Naive thymus-derived CD4-positive, alpha-beta T cell (primary cell): ENCODE measurements at regions of chr15 and their contacts with region 1.

Region 1: DNA sequence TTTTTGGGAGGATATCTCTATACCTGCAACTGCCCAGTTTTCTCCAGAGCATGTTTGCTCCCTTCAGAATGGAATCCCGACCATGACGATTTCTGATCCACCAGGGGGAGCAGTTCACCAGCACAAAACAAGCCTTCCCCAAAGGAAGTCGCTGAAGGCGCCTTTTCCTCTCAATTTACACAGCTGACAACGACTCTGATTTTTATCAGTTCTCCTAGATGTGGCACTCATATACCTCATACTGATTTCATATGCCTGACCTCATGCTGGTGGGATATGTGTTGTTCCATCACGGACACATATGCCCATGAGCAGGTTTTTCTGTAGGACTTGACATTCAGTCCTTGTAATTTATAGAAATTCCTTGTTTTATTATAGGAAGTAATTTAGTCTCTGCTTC is 1028.2 kb downstream of the MCTP2 start:
- DNase-seq: peak; percentile 7 to 61 (median 43)
- ATAC-seq: peak; percentile 40
- H3K4me3 ChIP-seq: no peak overlapping the region
- H3K4me3 Mint-ChIP-seq: no peak overlapping the region
- H3K27ac ChIP-seq: no peak overlapping the region
- H3K27ac Mint-ChIP-seq: no peak overlapping the region
- H3K4me1 ChIP-seq: no peaks in the 10 kb centered on the region
- H3K4me1 Mint-ChIP-seq: peaks cover 0 to 13% (median 0%) of the 10 kb centered on the region in 7 donors
- H3K27me3 ChIP-seq: peaks cover 0 to 7% of the 10 kb centered on the region in 2 donors
- H3K27me3 Mint-ChIP-seq: peaks cover 41 to 75% (median 44%) of the 10 kb centered on the region in 5 donors

Region 2: GRCh38 chr15:95365511-95366107 is 106.1 kb after region 1 on chr15:
- CTCF ChIA-PET with region 1: no interaction called
- POLR2A ChIA-PET with region 1: no interaction called
- intact Hi-C with region 1: no loop called
- DNase-seq: no peak
- ATAC-seq: no peak
- H3K4me3 ChIP-seq: no peak overlapping the region
- H3K4me3 Mint-ChIP-seq: no peak overlapping the region
- H3K27ac ChIP-seq: no peak overlapping the region
- H3K27ac Mint-ChIP-seq: no peak overlapping the region
- H3K4me1 ChIP-seq: no peaks in the 10 kb centered on the region
- H3K4me1 Mint-ChIP-seq: no peaks in the 10 kb centered on the region
- H3K27me3 ChIP-seq: no peaks in the 10 kb centered on the region
- H3K27me3 Mint-ChIP-seq: peaks cover 2 to 30% (median 26%) of the 10 kb centered on the region in 5 donors

Region 3: DNA sequence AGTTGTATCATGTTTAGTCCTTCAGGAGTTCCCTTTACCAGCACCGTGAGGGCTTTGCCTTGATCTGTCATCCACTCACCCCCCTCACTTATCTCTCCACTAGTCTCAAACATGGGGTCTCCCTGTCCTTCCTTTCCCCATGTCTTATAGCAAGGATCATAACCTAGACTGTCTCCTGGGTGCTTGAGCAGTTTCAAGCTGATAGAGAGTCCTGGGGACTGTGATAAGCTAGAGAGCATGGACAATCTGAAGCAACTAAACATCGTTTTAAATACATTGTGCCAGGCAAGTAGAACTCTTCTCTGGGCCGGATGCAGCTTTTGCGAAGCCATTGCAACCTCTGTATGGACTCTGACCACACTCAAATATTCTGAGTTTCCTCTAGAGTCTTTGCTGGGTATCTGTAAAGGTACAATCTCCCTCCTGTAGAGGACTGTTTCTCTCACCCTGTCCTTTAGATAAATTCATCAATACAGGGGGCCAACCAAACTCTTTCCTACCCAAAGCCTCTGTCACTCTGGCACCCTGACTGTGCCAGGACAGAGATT is 386.4 kb after region 1 on chr15:
- CTCF ChIA-PET with region 1: no interaction called
- POLR2A ChIA-PET with region 1: no interaction called
- intact Hi-C with region 1: no loop called
- DNase-seq: no peak
- ATAC-seq: no peak
- H3K4me3 ChIP-seq: no peak overlapping the region
- H3K4me3 Mint-ChIP-seq: no peak overlapping the region
- H3K27ac ChIP-seq: no peak overlapping the region
- H3K27ac Mint-ChIP-seq: no peak overlapping the region
- H3K4me1 ChIP-seq: no peaks in the 10 kb centered on the region
- H3K4me1 Mint-ChIP-seq: no peaks in the 10 kb centered on the region
- H3K27me3 ChIP-seq: no peaks in the 10 kb centered on the region
- H3K27me3 Mint-ChIP-seq: peaks cover 8 to 13% (median 9%) of the 10 kb centered on the region in 5 donors

Region 4: GRCh38 chr15:96893159-96893906 is 1633.8 kb after region 1 on chr15:
- CTCF ChIA-PET with region 1: interaction called, 5 read pairs
- POLR2A ChIA-PET with region 1: no interaction called
- intact Hi-C with region 1: loop called in 1 of 2 experiments (anchors 5 kb)
- DNase-seq: no peak
- ATAC-seq: no peak
- H3K4me3 ChIP-seq: no peak overlapping the region
- H3K4me3 Mint-ChIP-seq: no peak overlapping the region
- H3K27ac ChIP-seq: no peak overlapping the region
- H3K27ac Mint-ChIP-seq: no peak overlapping the region
- H3K4me1 ChIP-seq: peaks cover 0 to 7% of the 10 kb centered on the region in 2 donors
- H3K4me1 Mint-ChIP-seq: peaks cover 4 to 25% (median 16%) of the 10 kb centered on the region in 7 donors
- H3K27me3 ChIP-seq: no peaks in the 10 kb centered on the region
- H3K27me3 Mint-ChIP-seq: peaks cover 0 to 11% (median 0%) of the 10 kb centered on the region in 5 donors

Region 5: DNA sequence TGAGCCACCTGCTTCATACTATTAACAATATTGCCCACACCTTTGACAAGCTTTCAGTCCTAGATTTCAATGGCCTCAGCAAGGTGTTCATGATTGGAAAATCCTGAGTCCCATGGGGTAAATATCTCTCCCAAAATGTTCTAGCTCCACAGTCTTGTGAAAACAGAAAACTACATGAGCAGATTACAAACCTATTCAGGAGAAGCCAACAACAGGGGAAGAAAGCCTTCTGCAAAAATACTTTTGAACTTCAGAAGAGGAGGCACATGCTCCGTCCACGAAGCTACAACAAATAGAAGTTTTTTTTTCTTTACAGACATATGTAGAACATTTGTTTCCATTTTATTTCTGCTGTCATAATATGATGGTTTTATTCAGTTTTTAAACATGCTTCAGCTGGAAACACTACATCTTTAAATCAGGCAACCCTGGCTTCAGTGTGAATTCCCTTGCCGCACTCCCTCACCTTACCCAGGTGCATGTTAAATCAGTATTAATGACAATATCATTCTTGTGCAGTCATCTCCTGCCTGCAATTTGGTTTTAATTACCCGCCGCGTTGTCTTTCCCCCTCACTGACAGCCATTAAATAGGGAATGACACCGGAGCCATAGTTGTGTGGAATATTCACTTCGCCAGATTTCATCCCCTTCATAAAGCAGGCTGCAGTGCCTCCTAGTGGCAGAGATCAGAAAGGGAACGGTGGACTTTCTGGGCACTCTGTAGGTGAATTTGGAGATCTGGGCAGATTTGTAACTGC is 1975.5 kb after region 1 on chr15:
- CTCF ChIA-PET with region 1: interaction called, 5 read pairs
- POLR2A ChIA-PET with region 1: no interaction called
- intact Hi-C with region 1: loop called in 1 of 2 experiments (anchors 1 kb)
- DNase-seq: peak in 6 of 9 donors; percentile 2 to 25 (median 12)
- ATAC-seq: no peak
- H3K4me3 ChIP-seq: no peak overlapping the region
- H3K4me3 Mint-ChIP-seq: no peak overlapping the region
- H3K27ac ChIP-seq: no peak overlapping the region
- H3K27ac Mint-ChIP-seq: no peak overlapping the region
- H3K4me1 ChIP-seq: no peaks in the 10 kb centered on the region
- H3K4me1 Mint-ChIP-seq: peaks cover 0 to 6% (median 0%) of the 10 kb centered on the region in 7 donors
- H3K27me3 ChIP-seq: no peaks in the 10 kb centered on the region
- H3K27me3 Mint-ChIP-seq: peaks cover 0 to 28% (median 17%) of the 10 kb centered on the region in 5 donors